ENCODE measurements at regions of chr10 and their contacts with region 1.

Region 1: GRCh38 chr10:76700241-76700640 is 937.4 kb downstream of the KCNMA1 start:
- DNase-seq: no peak

Region 2: GRCh38 chr10:77603534-77603927 is 903.3 kb after region 1 on chr10:
- intact Hi-C with region 1: loop called in 1 of 2 experiments (anchors 5 kb)
- DNase-seq: peak; percentile 59

Measured in posterior vena cava (tissue), 2 donors.